Vagina (tissue), 2 donors: ENCODE measurements at regions of chr11 and their contacts with region 1.

Region 1: GRCh38 chr11:62394825-62395538 is 23.9 kb upstream of the SCGB1A1 start:
- DNase-seq: no peak
- H3K4me3 ChIP-seq: peak overlapping the region; percentile 24 to 33
- H3K27ac ChIP-seq: peak overlapping the region; percentile 75
- H3K4me1 ChIP-seq: peaks cover 65% of the 10 kb centered on the region
- H3K27me3 ChIP-seq: no peaks in the 10 kb centered on the region
- CTCF ChIP-seq: peak; percentile 62 to 78 (median 74)
- POLR2A ChIP-seq: no peak

Region 2: GRCh38 chr11:62705880-62706849 is 311.2 kb after region 1 on chr11:
- intact Hi-C with region 1: loop called (anchors 10 kb)
- DNase-seq: peak in 1 of 2 donors; percentile 90
- H3K4me3 ChIP-seq: peak overlapping the region; percentile 55 to 62
- H3K27ac ChIP-seq: peak overlapping the region; percentile 85
- H3K4me1 ChIP-seq: peaks cover 45% of the 10 kb centered on the region
- H3K27me3 ChIP-seq: no peaks in the 10 kb centered on the region
- CTCF ChIP-seq: no peak
- POLR2A ChIP-seq: peak in 1 of 2 donors; percentile 25